HEK293 (cell line): ENCODE measurements at regions of chr19 and their contacts with region 1.

Region 1: DNA sequence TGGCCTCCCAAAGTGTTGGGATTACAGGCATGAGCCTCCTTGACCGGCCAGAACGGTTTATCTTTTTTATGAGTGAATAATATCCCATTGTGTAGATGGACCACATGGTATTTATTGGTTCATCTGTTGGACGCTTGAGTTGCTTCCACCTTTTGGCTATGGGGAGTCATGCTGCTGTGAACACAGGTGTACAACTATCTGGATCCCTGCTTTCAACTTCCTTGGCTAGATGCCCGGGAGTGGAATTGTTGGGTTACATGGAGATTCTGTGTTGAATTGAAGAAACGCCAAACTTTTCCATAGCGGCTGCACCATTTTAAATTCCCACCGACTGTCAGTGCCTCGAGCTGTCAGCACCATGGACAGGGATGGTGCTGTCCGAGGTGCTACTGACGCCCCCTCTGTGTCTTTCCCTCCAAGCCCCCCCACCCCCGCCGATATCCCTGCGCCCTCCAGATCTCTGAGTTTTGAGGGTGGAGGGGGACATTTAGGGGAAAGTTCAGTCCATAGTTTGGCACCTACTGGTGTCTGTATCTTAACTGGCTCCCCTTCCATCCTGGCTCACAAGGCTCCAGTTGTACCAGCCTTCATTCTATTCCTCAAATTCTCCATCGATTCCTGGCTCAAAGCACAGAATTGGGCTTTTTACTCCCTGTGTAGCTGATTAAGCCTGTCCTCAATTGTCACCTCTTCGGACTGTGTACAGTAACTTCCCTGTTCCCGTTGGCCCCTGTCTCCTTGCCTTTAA is 27.3 kb downstream of the PNPLA6 start:
- H3K4me3 ChIP-seq: no peak overlapping the region
- H3K27ac ChIP-seq: no peak overlapping the region
- H3K4me1 ChIP-seq: no peaks in the 10 kb centered on the region
- CTCF ChIP-seq: no peak

Region 2: GRCh38 chr19:7515645-7516151 is 47.1 kb before region 1 on chr19 and contains the start of gene ZNF358:
- CTCF ChIA-PET with region 1: no interaction called
- POLR2A ChIA-PET with region 1: no interaction called
- H3K4me3 ChIP-seq: peak within 1 kb of the TSS; percentile 64
- H3K27ac ChIP-seq: peak within 1 kb of the TSS; percentile 65; the same call in 1 of the 2 replicates
- H3K4me1 ChIP-seq: peaks cover 4% of the 10 kb centered on the region
- CTCF ChIP-seq: no peak

Region 3: DNA sequence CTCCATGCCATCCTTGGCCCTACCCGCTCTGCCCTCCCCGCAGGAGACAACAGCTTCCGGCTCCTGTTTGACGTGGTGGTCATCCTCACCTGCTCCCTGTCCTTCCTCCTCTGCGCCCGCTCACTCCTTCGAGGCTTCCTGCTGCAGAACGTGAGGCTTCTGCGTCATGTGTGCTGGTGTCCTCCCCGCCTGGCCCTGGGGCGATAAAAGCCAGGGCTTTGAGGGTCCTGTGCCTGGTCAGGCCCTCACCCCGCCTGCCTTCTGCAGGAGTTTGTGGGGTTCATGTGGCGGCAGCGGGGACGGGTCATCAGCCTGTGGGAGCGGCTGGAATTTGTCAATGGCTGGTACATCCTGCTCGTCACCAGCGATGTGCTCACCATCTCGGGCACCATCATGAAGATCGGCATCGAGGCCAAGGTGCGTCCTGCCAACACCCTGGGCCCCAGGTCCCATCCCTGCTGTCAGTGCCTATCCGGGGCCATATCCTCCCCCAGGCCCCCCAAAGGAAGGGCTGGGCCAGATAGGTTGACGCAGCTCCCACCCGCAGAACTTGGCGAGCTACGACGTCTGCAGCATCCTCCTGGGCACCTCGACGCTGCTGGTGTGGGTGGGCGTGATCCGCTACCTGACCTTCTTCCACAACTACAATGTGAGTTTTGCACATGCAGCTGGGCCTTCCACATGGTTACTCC is 34.1 kb before region 1 on chr19:
- CTCF ChIA-PET with region 1: no interaction called
- POLR2A ChIA-PET with region 1: no interaction called
- H3K4me3 ChIP-seq: no peak overlapping the region
- H3K27ac ChIP-seq: no peak overlapping the region
- H3K4me1 ChIP-seq: no peaks in the 10 kb centered on the region
- CTCF ChIP-seq: no peak

Region 4: GRCh38 chr19:7595466-7596133 is 32.8 kb after region 1 on chr19 and contains the start of gene CAMSAP3:
- CTCF ChIA-PET with region 1: interaction called, 29 read pairs
- POLR2A ChIA-PET with region 1: no interaction called
- H3K4me3 ChIP-seq: peak within 1 kb of the TSS; percentile 70
- H3K27ac ChIP-seq: no peak within 1 kb of the TSS; the same call in 1 of the 2 replicates
- H3K4me1 ChIP-seq: peaks cover 8% of the 10 kb centered on the region
- CTCF ChIP-seq: no peak

Region 5: DNA sequence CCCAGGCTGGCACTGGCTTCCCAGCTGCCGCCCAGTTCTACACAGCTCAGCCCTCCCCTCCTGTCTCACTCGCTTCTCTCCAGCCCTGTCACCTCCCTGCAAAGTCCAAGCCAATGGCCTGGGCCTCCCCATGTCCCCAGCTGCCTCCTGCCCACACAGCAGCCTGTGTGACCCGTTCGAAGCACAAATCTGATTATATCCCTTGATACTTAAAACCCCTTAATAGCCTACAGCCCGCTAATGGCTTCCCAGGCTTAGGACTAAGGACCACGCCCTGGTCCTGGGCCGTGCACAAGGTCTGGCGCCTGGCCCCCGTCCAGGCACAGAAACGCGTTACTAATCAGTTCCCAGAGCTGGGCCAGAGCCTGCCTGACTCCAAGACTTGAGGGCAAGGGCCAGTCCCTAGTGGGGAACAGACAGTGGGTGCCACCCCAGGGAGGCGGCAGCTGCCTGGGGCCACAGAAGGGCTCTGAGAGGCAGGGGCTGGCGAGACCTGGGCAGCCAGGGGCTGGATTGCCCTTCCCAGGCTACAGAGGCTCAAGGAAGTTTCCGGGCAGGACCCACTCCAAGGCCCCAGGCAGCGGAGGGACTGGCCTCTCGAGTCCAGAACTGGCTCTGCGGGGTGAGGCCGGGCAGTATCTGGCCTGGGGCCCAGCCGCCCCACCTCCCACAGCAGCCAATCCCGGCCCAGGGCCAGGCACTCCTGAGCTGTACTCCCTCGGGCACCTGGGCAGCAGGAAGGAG is 56.1 kb after region 1 on chr19:
- CTCF ChIA-PET with region 1: interaction called, 10 read pairs
- POLR2A ChIA-PET with region 1: no interaction called
- H3K4me3 ChIP-seq: no peak overlapping the region
- H3K27ac ChIP-seq: peak overlapping the region; percentile 31; the same call in 1 of the 2 replicates
- H3K4me1 ChIP-seq: no peaks in the 10 kb centered on the region; the same call in 1 of the 2 replicates
- CTCF ChIP-seq: no peak

Region 6: DNA sequence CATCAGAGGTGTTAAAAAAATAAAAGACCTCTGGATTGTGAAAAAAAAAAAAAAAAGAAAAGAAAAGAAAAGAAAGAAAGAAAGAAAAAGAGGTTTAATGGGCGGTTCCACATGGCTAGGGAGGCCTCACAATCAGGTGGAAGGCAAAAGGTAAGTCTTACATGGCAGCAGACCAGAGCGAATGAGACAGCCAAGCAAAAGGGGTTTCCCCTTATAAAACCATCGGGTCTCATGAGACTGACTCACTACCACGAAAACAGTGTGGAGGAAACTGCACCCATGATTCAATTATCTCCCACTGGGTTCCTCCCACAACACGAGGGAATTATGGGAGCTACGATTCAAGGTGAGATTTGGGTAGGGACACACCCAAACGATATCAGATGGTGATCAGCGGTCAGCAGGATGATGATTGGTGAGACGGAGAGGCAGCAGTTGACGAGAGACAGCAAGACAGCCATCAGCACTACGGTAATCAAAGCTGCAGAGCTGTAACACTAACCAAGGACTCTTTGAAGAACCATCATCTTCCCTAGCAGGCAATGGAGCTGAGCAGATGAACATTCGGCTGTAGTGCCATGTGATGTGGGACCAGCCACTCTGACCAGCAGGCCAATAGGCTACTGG is 188.4 kb after region 1 on chr19:
- CTCF ChIA-PET with region 1: no interaction called
- POLR2A ChIA-PET with region 1: no interaction called
- H3K4me3 ChIP-seq: no peak overlapping the region
- H3K27ac ChIP-seq: no peak overlapping the region
- H3K4me1 ChIP-seq: no peaks in the 10 kb centered on the region
- CTCF ChIP-seq: no peak

Region 7: GRCh38 chr19:7799640-7800355 is 237.0 kb after region 1 on chr19:
- CTCF ChIA-PET with region 1: interaction called, 80 read pairs
- POLR2A ChIA-PET with region 1: no interaction called
- H3K4me3 ChIP-seq: no peak overlapping the region
- H3K27ac ChIP-seq: no peak overlapping the region
- H3K4me1 ChIP-seq: no peaks in the 10 kb centered on the region
- CTCF ChIP-seq: 0 out of 2 replicates have a peak, but pooled peaks have one; percentile 23